ENCODE measurements at regions of chr11 and their contacts with region 1.

Region 1: GRCh38 chr11:34357701-34358257 is at the start of gene ABTB2:
- DNase-seq: peak; percentile 89 to 98 (median 98)
- H3K4me3 ChIP-seq: peak within 1 kb of the TSS; percentile 50 to 92 (median 73)
- H3K27ac ChIP-seq: peak within 1 kb of the TSS in 46 of 59 donors; percentile 13 to 82 (median 60)
- H3K27me3 ChIP-seq: peaks cover 0 to 3% (median 0%) of the 10 kb centered on the region in 45 donors
- CTCF ChIP-seq: peak in 18 of 56 donors; percentile 7 to 48 (median 26)
- total RNA-seq, gene ABTB2: 3.4 to 16.8 (median 6.8) TPM

Region 2: GRCh38 chr11:33869481-33870422 is 488.0 kb before region 1 on chr11:
- intact Hi-C with region 1: loop called in 1 of 2 experiments (anchors 10 kb)
- DNase-seq: peak in 2 of 10 donors; percentile 24 to 59
- H3K4me3 ChIP-seq: peak overlapping the region; percentile 33 to 79 (median 68)
- H3K27ac ChIP-seq: peak overlapping the region in 56 of 59 donors; percentile 0 to 94 (median 81)
- H3K27me3 ChIP-seq: peaks cover 0 to 10% (median 0%) of the 10 kb centered on the region in 45 donors
- CTCF ChIP-seq: no peak

Region 3: DNA sequence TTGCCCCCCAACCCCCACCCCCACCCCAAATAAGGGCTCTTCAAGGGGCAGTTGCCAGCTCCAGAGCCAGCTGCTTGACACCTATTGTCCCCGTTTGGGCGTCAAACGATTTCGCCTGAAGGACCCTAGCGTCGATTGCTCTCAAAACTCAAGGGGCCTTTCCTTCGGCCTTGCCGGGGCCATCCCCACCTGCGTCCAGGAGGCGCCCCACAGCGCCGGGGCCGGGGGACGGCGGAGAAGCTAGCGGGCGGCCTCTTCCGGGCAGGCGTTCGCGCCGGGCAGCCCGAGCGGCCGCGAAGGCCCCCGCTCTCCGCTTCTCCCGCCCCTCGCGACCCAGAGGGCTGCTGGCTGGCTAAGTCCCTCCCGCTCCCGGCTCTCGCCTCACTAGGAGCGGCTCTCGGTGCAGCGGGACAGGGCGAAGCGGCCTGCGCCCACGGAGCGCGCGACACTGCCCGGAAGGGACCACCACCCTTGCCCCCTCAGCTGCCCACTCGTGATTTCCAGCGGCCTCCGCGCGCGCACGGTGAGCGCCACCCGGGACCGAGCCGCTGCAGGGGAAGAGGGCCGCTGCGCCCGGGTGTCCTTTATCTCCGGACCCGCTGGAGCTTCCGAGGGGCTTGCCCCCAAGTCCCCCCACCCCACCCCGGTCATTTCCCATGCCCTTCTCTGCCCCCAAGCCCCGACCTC is 306.3 kb before region 1 on chr11 and contains the start of gene CAPRIN1:
- intact Hi-C with region 1: loop called (anchors 2 to 5 kb)
- DNase-seq: peak; percentile 70 to 91 (median 86)
- H3K4me3 ChIP-seq: peak within 1 kb of the TSS; percentile 66 to 99 (median 91)
- H3K27ac ChIP-seq: peak within 1 kb of the TSS; percentile 95 to 100 (median 100)
- H3K27me3 ChIP-seq: no peaks in the 10 kb centered on the region
- CTCF ChIP-seq: peak in 6 of 56 donors; percentile 2 to 19 (median 8)
- total RNA-seq, gene CAPRIN1: 117 to 192 (median 159) TPM

Region 4: GRCh38 chr11:34174412-34175041 is 183.3 kb before region 1 on chr11:
- intact Hi-C with region 1: loop called (anchors 1 kb)
- DNase-seq: peak; percentile 74 to 90 (median 84)
- H3K4me3 ChIP-seq: peak overlapping the region in 57 of 59 donors; percentile 3 to 60 (median 42)
- H3K27ac ChIP-seq: peak overlapping the region in 10 of 59 donors; percentile 12 to 71 (median 34)
- H3K27me3 ChIP-seq: peaks cover 0 to 3% (median 0%) of the 10 kb centered on the region in 45 donors
- CTCF ChIP-seq: peak; percentile 70 to 98 (median 92)

Region 5: DNA sequence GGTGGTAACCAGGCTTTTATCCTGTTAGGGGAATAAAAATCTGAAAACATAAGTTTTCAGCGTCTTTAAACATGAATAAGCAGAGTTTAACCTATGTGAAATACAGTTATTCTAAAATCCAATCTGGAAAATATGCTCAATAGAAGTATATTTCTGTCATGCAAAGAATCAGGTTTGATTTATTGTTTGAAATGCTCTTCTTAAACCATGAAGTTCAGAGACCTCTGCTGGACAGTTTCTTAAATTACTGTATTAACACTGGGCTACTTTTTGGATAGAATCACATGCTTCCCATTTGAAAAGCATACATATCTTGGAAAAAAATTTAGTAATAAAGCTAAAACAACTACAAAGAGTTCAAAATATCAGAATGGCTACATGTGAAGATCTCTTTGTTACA is 533.0 kb after region 1 on chr11:
- intact Hi-C with region 1: loop called in 1 of 2 experiments (anchors 10 kb)
- DNase-seq: no peak
- H3K4me3 ChIP-seq: no peak overlapping the region
- H3K27ac ChIP-seq: peak overlapping the region in 8 of 59 donors; percentile 6 to 66 (median 26)
- H3K27me3 ChIP-seq: no peaks in the 10 kb centered on the region
- CTCF ChIP-seq: peak; percentile 39 to 90 (median 72)